Ovary (tissue), 10 donors: ENCODE measurements at regions of chr20 and their contacts with region 1.

Region 1: DNA sequence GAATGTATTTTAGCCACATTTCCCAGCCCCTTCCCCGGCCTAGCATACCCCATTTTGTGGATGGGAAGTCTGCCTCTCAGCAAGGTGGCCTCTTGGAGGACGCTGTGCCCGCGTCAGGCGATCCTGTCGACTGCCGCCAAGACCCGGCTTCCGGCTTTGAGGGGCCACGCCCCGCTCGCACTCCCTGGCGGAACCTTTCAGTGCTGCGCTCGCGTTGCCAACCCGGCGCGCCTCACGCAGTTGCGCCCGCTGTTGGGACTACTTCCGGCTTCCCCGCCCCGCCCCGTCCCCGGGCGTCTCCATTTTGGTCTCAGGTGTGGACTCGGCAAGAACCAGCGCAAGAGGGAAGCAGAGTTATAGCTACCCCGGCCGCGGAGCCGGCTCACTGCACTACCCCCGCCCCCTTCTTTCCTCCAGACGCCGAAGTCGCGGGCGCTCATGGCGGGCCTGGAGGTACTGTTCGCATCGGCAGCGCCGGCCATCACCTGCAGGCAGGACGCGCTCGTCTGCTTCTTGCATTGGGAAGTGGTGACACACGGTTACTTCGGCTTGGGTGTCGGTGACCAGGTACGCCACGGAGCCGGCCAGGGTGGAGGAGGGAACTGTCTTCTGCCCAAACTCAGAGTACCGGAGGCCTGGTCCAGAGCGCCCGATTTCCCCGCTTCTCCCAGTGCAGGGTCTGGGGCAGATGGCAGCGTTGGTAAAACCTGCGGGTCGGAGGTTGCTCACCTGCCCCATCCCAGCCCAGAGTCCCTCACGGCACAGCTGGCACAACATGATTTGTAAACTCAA is at the start of gene PSMF1:
- DNase-seq: peak; percentile 87 to 95 (median 92)
- H3K4me3 ChIP-seq: peak within 1 kb of the TSS; percentile 90
- H3K27ac ChIP-seq: peak within 1 kb of the TSS; percentile 1 to 38
- H3K4me1 ChIP-seq: peaks cover 23% of the 10 kb centered on the region
- H3K27me3 ChIP-seq: no peaks in the 10 kb centered on the region
- CTCF ChIP-seq: peak in 1 of 3 donors; percentile 26
- EP300 ChIP-seq: no peak
- POLR2A ChIP-seq: no peak
- total RNA-seq, gene PSMF1: 33.4 to 163 (median 127) TPM

Region 2: DNA sequence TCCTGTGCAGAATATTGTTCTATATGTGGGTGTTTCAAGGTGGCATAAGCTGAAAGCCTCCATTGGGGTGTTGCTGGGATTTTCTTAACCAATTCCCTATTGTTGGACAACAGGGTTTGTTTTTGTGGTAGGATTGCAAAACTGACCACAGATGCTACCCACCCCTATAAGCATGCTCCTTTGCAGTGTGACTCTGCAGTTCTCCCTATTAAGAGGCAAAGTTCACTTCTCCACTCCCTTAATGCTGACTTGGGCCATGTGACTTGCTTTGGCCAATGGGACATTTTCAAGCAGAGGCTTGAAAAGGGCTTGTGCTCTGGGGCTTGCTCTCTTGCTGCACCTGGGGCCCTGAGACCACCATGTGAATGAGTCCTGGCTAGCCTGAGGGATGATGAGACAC is 193.9 kb before region 1 on chr20:
- intact Hi-C with region 1: no loop called
- DNase-seq: no peak
- H3K4me3 ChIP-seq: no peak overlapping the region
- H3K27ac ChIP-seq: no peak overlapping the region
- H3K4me1 ChIP-seq: peaks cover 2% of the 10 kb centered on the region
- H3K27me3 ChIP-seq: no peaks in the 10 kb centered on the region
- CTCF ChIP-seq: no peak
- EP300 ChIP-seq: no peak
- POLR2A ChIP-seq: no peak

Region 3: DNA sequence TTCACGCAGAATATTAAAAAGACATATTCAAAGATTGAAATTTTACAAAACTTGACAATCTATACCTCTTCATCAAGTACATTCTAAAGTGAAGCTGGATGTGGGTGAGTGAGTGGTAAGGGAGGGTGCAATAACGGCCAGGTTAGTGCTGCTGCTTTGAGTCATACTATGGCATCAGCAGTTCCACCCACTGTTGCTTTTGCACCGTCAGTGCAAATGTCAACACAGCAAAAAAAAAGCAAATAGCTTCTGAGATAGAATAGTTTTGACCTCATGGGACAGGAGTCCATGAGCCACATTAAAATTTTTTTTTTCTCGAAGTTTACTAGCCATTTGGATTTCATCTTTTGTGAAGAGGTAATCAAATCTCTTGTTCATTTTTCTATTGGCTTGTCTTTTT is 31.7 kb after region 1 on chr20:
- intact Hi-C with region 1: no loop called
- DNase-seq: no peak
- H3K4me3 ChIP-seq: no peak overlapping the region
- H3K27ac ChIP-seq: no peak overlapping the region
- H3K4me1 ChIP-seq: peaks cover 6% of the 10 kb centered on the region
- H3K27me3 ChIP-seq: no peaks in the 10 kb centered on the region
- CTCF ChIP-seq: no peak
- EP300 ChIP-seq: no peak
- POLR2A ChIP-seq: no peak

Region 4: GRCh38 chr20:1466211-1467081 is 347.9 kb after region 1 on chr20 and contains the start of gene NSFL1C:
- intact Hi-C with region 1: loop called in 1 of 4 experiments (anchors 5 kb)
- DNase-seq: peak; percentile 93 to 97 (median 96)
- H3K4me3 ChIP-seq: peak within 1 kb of the TSS; percentile 86
- H3K27ac ChIP-seq: peak within 1 kb of the TSS; percentile 16 to 69
- H3K4me1 ChIP-seq: peaks cover 10% of the 10 kb centered on the region
- H3K27me3 ChIP-seq: no peaks in the 10 kb centered on the region
- CTCF ChIP-seq: peak; percentile 96 to 99 (median 98)
- EP300 ChIP-seq: no peak
- POLR2A ChIP-seq: peak; percentile 71
- total RNA-seq, gene NSFL1C: 23.4 to 79.6 (median 63.2) TPM